Psoas muscle (tissue), 8 donors: ENCODE measurements at regions of chr1 and their contacts with region 1.

Region 1: GRCh38 chr1:93179886-93180722 is at the start of gene TMED5:
- DNase-seq: peak; percentile 98 to 99
- ATAC-seq: peak; percentile 95 to 96 (median 96)
- H3K4me3 ChIP-seq: peak within 1 kb of the TSS; percentile 85
- H3K27ac ChIP-seq: peak within 1 kb of the TSS; percentile 99
- H3K4me1 ChIP-seq: peaks cover 24% of the 10 kb centered on the region
- H3K27me3 ChIP-seq: no peaks in the 10 kb centered on the region
- CTCF ChIP-seq: peak; percentile 27
- total RNA-seq, gene TMED5: 38.6 to 89.0 (median 64.6) TPM

Region 2: GRCh38 chr1:92858564-92859399 is 321.3 kb before region 1 on chr1:
- intact Hi-C with region 1: no loop called
- DNase-seq: no peak
- ATAC-seq: peak; percentile 78 to 91 (median 88)
- H3K4me3 ChIP-seq: peak overlapping the region; percentile 54
- H3K27ac ChIP-seq: peak overlapping the region; percentile 74
- H3K4me1 ChIP-seq: peaks cover 10% of the 10 kb centered on the region
- H3K27me3 ChIP-seq: no peaks in the 10 kb centered on the region
- CTCF ChIP-seq: peak; percentile 98

Region 3: GRCh38 chr1:93078986-93079654 is 101.0 kb before region 1 on chr1 and contains the start of gene MTF2:
- intact Hi-C with region 1: loop called (anchors 5 kb)
- DNase-seq: peak; percentile 97 to 98
- ATAC-seq: peak; percentile 96 to 98 (median 96)
- H3K4me3 ChIP-seq: peak within 1 kb of the TSS; percentile 82
- H3K27ac ChIP-seq: peak within 1 kb of the TSS; percentile 84
- H3K4me1 ChIP-seq: peaks cover 21% of the 10 kb centered on the region
- H3K27me3 ChIP-seq: no peaks in the 10 kb centered on the region
- CTCF ChIP-seq: no peak
- total RNA-seq, gene MTF2: 6.6 to 10.6 (median 8.3) TPM

Region 4: GRCh38 chr1:93129507-93130099 is 50.5 kb before region 1 on chr1:
- intact Hi-C with region 1: loop called in 1 of 2 experiments (anchors 1 kb)
- DNase-seq: no peak
- ATAC-seq: no peak
- H3K4me3 ChIP-seq: no peak overlapping the region
- H3K27ac ChIP-seq: no peak overlapping the region
- H3K4me1 ChIP-seq: no peaks in the 10 kb centered on the region
- H3K27me3 ChIP-seq: no peaks in the 10 kb centered on the region
- CTCF ChIP-seq: no peak

Region 5: GRCh38 chr1:93255222-93256079 is 75.3 kb after region 1 on chr1:
- intact Hi-C with region 1: no loop called
- DNase-seq: no peak
- ATAC-seq: no peak
- H3K4me3 ChIP-seq: no peak overlapping the region
- H3K27ac ChIP-seq: no peak overlapping the region
- H3K4me1 ChIP-seq: no peaks in the 10 kb centered on the region
- H3K27me3 ChIP-seq: no peaks in the 10 kb centered on the region
- CTCF ChIP-seq: no peak